ENCODE measurements at regions of chr18 and their contacts with region 1.

Region 1: DNA sequence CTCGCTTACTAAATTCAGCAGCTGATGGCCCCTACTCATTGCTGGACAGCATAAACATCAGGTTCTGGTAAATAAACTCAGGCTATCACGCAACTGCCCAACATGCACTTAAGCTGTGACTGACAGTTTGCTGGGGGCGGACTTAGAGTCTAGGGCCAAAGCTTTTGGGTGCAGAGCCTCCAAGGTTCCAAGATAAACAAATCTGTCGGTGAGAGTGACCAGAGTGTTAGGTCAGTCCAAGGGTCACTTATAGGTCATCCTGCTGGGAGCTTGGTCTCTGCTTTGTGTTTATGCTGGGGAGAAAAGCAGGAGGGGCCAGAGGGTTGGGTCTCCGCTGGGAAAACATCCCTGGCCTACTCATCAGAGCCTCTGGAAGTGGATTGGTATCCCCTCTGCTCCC is 188.6 kb upstream of the GATA6 start:
- DNase-seq: no peak
- CTCF ChIP-seq: no peak

Region 2: GRCh38 chr18:21727702-21728101 is 253.0 kb before region 1 on chr18:
- CTCF ChIA-PET with region 1: no interaction called
- POLR2A ChIA-PET with region 1: no interaction called
- DNase-seq: no peak
- CTCF ChIP-seq: no peak

Region 3: DNA sequence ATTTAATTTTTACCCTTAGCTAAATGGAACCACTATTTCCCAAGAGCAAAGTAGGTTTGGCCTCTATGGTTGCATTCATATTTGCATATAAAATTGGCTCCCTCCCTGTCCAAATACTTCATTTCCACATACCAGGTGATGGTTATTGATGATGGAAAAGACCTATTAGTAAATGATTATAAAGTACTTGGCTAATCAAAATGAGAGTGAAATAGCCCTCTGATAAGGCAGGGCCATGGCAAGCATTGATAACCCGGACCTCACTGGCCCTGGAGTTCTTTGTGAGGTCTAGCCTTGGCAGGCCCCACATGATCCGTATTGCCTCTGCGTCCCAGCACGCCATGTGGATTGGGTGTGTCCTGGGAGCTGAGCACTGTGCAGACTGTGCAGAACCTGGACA is 12.4 kb before region 1 on chr18:
- CTCF ChIA-PET with region 1: no interaction called
- POLR2A ChIA-PET with region 1: no interaction called
- DNase-seq: no peak
- CTCF ChIP-seq: no peak

Region 4: DNA sequence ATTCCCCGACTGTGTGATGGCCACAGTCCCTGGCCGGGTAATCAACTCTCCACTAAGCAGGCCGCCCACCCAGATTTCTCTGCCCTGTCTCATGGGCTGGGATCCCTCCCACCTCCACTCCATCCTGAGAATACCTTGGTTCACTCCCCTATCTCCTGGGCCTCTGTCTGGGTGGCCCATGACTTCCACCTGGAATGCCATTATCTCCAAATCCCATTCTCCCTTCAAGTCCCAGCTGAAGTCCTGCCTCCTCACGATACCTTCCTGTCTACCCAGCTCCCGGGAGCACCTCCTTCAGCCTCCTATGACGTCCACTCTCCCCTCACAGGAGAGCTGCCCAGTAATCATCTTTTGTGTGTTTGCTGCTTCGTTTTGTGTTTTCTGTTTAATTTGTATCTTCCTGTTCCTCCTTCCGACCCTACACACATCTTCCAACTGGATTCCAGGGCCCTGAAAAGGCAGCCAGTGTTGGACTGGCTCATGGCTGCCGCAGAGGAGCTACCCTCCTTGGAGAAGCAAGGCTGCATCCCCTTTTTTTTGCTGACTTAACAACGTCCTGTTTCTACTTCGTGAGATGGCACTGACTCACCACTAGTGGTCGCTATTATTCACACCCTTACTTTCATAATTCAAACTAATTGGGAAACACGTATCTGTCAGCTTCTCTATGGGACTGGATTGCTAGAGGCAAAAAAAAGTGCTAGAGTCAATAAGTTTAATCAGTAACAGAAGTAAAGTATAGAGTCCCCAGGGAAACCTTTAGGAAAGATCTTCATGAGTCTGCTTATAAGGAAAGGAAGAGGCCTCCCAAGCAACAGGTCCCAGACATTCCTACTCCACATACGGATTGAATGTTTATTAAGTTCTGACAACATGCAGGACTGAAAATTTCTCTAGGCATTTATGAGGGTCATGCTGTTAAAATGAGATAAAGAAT is 16.7 kb after region 1 on chr18:
- CTCF ChIA-PET with region 1: interaction called, 18 read pairs
- POLR2A ChIA-PET with region 1: no interaction called
- DNase-seq: peak; percentile 67
- CTCF ChIP-seq: peak; percentile 82

Region 5: DNA sequence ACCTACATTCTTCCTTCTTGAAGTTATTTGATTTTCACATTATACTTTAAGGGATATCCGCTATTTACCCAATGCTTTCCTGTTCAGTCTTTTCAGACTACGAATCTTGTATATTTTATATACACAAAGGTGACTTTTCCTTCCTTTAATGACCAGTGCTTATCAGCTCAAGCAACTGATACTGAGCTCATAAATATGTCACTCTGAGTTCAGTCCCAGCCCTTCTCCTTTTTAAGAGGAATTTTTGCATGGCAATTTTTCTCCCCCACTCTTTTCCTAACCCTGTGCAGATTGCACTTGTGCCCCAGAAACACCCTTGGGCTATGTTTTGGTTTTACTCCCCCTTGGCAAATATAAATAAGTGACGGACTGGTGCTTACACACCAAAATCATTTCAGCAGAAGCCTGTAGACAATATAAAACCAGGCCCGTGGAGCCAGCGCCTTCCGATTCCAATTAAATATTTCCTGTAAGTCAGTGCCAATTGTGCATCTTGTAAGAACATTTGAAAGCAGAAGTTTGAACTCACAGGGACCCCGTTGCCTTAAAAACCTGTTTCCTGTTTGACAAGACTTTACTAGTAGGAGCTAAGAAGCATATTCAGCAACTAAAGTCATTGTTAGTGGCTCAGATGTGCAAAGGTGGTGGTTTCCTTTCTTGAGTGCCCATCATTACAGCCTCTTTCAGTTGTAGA is 122.4 kb after region 1 on chr18:
- CTCF ChIA-PET with region 1: no interaction called
- POLR2A ChIA-PET with region 1: no interaction called
- DNase-seq: no peak
- CTCF ChIP-seq: no peak

Region 6: DNA sequence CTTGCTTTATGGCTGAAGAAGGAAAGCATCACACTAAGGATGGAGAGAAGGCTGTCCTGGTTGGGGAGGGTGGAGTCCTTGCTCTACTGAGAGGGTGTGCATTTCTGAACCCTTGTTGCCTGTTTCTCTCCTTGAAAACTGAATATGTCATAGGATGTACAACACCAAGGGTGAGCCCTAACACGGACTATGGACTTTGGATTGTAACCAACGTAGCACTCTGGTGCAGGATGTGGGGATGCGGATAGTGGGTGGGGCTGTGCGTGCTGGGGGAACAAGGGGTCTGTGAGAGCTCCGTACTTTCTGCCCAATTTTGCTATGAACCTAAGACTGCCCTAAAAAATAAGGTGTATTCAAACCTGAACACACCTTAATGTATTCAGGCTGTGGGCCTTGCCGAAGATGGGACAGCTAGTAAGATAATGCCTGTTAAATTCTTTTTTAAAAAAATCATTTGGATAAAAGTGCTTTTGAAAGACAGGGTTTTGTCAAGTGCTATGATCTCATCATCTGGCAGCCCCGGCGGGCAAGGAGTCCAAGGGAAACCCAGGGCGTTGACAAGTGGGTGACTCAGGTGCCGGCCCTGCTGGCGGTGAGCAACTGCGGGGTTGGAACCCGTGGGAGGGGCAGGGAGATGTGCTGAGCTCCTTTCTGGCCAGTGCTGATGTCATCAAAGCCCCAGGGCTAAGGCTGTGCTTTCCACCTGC is 242.7 kb after region 1 on chr18:
- CTCF ChIA-PET with region 1: no interaction called
- POLR2A ChIA-PET with region 1: no interaction called
- DNase-seq: no peak
- CTCF ChIP-seq: no peak